AG04449 (cell line): ENCODE measurements at regions of chr5 and their contacts with region 1.

Region 1: DNA sequence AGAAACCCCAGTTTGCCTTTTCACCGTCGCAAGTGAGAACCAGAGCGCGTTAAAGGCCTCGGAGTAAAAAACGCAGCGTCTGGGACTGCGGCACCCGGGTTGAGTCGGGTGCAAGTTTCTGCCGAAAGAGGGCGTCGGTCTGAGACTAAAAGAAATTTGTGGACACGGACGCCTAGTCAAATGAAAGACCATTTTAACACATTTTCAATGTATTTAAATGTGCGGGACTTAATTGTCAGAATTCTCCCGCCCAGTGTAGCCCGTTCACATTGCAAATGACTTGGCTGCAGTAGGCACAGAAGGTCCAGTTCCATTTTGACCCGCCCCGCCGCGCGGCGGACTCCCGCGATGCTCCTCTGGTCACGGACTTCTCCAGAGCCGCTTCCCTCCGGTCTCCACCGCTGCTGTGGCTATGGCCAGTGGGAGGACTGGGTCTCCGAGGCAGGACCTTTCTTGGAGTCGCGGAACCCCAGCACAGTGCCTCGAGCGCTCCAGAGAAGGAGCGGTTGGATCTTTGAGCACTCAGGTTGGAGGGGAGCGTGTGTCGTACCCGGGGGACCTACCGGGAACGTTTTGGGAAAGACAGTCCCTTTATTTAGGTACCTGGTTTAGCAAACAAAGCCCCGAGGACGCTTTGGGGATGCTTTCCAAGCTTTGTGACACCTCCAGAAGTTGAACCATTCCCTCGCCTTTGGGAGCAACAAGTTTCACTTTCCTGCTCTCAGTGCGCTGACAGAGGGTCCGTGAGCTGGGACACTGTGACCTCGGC is 1.2 kb upstream of the NPR3 start:
- DNase-seq: no peak
- H3K4me3 ChIP-seq: peak overlapping the region; percentile 84
- CTCF ChIP-seq: peak; percentile 69

Region 2: GRCh38 chr5:32736842-32737241 is 26.9 kb after region 1 on chr5:
- CTCF ChIA-PET with region 1: interaction called, 12 read pairs
- POLR2A ChIA-PET with region 1: no interaction called
- DNase-seq: no peak
- H3K4me3 ChIP-seq: no peak overlapping the region
- CTCF ChIP-seq: no peak

Region 3: GRCh38 chr5:32786311-32786710 is 76.3 kb after region 1 on chr5:
- CTCF ChIA-PET with region 1: no interaction called
- POLR2A ChIA-PET with region 1: no interaction called
- DNase-seq: no peak
- H3K4me3 ChIP-seq: no peak overlapping the region
- CTCF ChIP-seq: no peak

Region 4: DNA sequence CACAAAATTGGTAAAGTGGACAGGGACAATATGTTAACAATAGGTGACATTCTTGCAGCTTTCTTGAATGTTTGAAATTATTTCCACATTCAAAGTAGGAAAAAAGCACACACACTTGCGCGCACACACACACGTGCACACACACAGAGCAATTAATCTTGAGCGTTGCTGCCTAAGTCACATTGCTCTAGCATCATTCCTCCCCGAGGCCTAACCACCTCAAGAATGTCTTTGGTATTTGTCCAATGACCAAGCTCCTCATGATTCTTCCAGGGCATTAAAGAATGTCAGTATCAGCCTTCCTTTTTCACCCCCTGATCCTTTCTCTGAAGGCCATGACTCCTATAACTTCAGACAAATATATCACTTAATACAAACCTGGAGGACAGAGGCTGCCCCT is 199.2 kb after region 1 on chr5:
- CTCF ChIA-PET with region 1: interaction called, 115 read pairs
- POLR2A ChIA-PET with region 1: interaction called, 3 read pairs
- DNase-seq: peak; percentile 56
- H3K4me3 ChIP-seq: no peak overlapping the region
- CTCF ChIP-seq: no peak

Region 5: DNA sequence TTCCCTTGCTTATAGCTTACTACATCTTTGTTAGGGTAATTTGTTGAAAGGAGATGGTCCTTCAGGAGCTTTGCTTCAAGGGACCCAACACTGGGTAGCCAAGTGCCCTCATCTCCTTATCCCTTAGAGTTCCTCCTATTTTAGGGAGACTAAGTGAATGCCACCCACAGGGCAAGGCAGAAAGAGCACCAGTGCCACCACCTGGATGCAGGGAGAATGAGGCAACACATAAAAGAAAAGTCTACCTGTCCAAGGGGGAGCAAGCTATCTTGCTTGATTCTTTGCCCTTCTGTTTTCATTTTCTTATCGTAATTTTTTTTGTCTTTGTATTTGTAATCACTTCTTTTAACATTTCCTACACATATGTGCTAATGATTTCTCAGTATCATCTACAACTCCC is 206.7 kb after region 1 on chr5:
- CTCF ChIA-PET with region 1: interaction called, 115 read pairs
- POLR2A ChIA-PET with region 1: interaction called, 3 read pairs
- DNase-seq: no peak
- H3K4me3 ChIP-seq: no peak overlapping the region
- CTCF ChIP-seq: peak; percentile 63

Region 6: GRCh38 chr5:33180900-33181299 is 470.9 kb after region 1 on chr5:
- CTCF ChIA-PET with region 1: interaction called, 42 read pairs
- POLR2A ChIA-PET with region 1: no interaction called
- DNase-seq: peak; percentile 5
- H3K4me3 ChIP-seq: no peak overlapping the region
- CTCF ChIP-seq: peak; percentile 32

Region 7: GRCh38 chr5:33423018-33423630 is 713.2 kb after region 1 on chr5:
- CTCF ChIA-PET with region 1: interaction called, 34 read pairs
- POLR2A ChIA-PET with region 1: no interaction called
- DNase-seq: no peak
- H3K4me3 ChIP-seq: no peak overlapping the region
- CTCF ChIP-seq: no peak